Activated naive CD4-positive, alpha-beta T cell treated with anti-CD3 and anti-CD28 coated beads, Interleukin-2, amount 10 ng/mL, durations not matched to agents 7 days and 5 days (primary cell): ENCODE measurements at regions of chr12 and their contacts with region 1.

Region 1: GRCh38 chr12:6461401-6462233 is 8.9 kb downstream of the VAMP1 start:
- DNase-seq: peak; percentile 92
- H3K4me3 Mint-ChIP-seq: peak overlapping the region; percentile 75
- H3K27ac Mint-ChIP-seq: peak overlapping the region; percentile 100
- H3K4me1 Mint-ChIP-seq: peaks cover 89% of the 10 kb centered on the region
- H3K27me3 Mint-ChIP-seq: no peaks in the 10 kb centered on the region

Region 2: DNA sequence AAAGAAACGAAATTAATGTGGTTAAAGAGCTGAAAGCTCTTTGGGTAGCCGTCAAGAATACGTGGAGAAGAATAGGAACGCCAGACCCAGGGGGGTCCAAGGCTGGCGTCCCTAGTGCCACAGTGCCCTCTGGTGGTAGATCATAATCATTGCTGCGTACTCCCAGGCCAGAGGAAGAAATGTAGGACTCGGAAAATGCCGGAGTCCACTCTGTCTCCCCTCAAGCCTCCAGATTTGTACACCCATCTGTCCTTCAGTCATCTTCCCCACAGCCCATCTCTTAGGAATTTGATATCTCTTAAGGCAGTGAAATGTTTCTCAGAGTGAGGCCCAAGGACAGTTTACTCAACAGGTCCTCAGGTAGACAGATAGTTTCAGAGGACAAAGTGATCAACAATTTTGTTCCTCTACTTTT is 176.5 kb before region 1 on chr12:
- CTCF ChIA-PET with region 1: no interaction called
- DNase-seq: peak; percentile 69
- H3K4me3 Mint-ChIP-seq: no peak overlapping the region
- H3K27ac Mint-ChIP-seq: no peak overlapping the region
- H3K4me1 Mint-ChIP-seq: no peaks in the 10 kb centered on the region
- H3K27me3 Mint-ChIP-seq: peaks cover 35% of the 10 kb centered on the region

Region 3: GRCh38 chr12:6434205-6435140 is 27.1 kb before region 1 on chr12:
- CTCF ChIA-PET with region 1: interaction called, 19 read pairs
- DNase-seq: peak; percentile 65
- H3K4me3 Mint-ChIP-seq: no peak overlapping the region
- H3K27ac Mint-ChIP-seq: peak overlapping the region; percentile 87
- H3K4me1 Mint-ChIP-seq: peaks cover 59% of the 10 kb centered on the region
- H3K27me3 Mint-ChIP-seq: no peaks in the 10 kb centered on the region

Region 4: GRCh38 chr12:6443361-6443983 is 18.1 kb before region 1 on chr12:
- CTCF ChIA-PET with region 1: interaction called, 63 read pairs
- DNase-seq: peak; percentile 26
- H3K4me3 Mint-ChIP-seq: peak overlapping the region; percentile 97
- H3K27ac Mint-ChIP-seq: peak overlapping the region; percentile 95
- H3K4me1 Mint-ChIP-seq: peaks cover 59% of the 10 kb centered on the region
- H3K27me3 Mint-ChIP-seq: no peaks in the 10 kb centered on the region